ENCODE measurements at regions of chr7 and their contacts with region 1.

Region 1: GRCh38 chr7:66237906-66238772 is 33.0 kb downstream of the TPST1 start:
- DNase-seq: no peak
- H3K4me3 ChIP-seq: no peak overlapping the region
- H3K27ac ChIP-seq: peak overlapping the region; percentile 20 to 29
- H3K4me1 ChIP-seq: no peaks in the 10 kb centered on the region
- H3K27me3 ChIP-seq: no peaks in the 10 kb centered on the region
- CTCF ChIP-seq: no peak
- POLR2A ChIP-seq: no peak

Region 2: GRCh38 chr7:66213637-66214036 is 24.5 kb before region 1 on chr7:
- intact Hi-C with region 1: loop called (anchors 2 kb)
- DNase-seq: no peak
- H3K4me3 ChIP-seq: no peak overlapping the region
- H3K27ac ChIP-seq: no peak overlapping the region
- H3K4me1 ChIP-seq: no peaks in the 10 kb centered on the region
- H3K27me3 ChIP-seq: no peaks in the 10 kb centered on the region
- CTCF ChIP-seq: no peak
- POLR2A ChIP-seq: no peak

Region 3: DNA sequence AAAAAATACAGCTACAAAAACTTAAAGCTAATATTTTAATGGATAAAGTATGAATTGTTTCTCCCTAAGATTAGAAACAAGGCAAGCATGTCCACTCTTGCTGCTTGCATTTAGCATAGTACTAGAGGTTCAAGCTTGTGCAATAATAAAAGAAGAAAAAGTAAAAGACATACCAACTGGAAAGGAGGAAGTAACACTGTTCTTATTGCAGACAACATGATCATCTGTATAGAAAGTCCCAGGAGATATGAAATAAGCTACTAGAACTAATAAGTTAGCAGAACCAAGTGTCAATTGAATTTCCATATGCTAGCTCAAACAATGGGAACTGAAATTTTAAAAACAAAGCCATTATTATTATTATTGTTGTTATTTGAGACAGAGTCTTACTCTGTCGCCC is 482.4 kb after region 1 on chr7:
- intact Hi-C with region 1: no loop called
- DNase-seq: no peak
- H3K4me3 ChIP-seq: no peak overlapping the region
- H3K27ac ChIP-seq: no peak overlapping the region
- H3K4me1 ChIP-seq: no peaks in the 10 kb centered on the region
- H3K27me3 ChIP-seq: no peaks in the 10 kb centered on the region
- CTCF ChIP-seq: no peak
- POLR2A ChIP-seq: no peak